A549 (cell line): ENCODE measurements at regions of chr2 and their contacts with region 1.

Region 1: DNA sequence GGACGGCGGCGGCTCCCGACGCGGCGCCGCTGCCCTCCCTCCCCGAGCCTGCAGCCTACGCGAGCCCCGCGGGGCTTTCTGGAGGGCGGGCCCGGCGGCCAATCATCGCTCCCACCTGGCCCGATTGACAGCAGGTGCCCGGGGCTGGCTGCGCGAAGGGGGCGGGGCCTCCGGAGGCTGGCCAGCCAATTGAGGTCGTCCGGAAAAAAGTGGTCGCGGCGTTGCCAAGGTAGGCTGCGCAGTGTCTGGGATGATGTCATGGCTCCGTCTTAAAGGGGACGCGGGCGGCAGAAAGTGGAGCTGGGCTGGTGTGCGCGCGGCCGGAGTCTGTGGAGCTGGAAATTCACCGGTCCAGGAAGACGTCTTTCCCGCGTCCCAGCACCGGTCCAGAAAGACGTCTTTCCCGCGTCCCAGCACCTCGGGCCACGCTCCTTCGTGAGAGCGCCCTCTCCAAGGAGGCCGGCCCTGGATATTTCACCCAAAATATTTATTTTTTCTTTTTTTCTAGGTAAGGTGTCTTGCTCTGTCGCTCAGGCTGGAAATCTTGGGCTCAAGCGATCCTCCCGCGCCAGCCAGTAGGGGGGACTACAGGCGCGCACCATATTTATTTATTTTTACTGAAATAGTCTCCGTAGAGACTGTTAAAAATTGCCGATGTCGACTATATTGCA is at the start of gene ACTR1B:
- DNase-seq: peak; percentile 85 to 98
- ATAC-seq: peak; percentile 90 to 95
- H3K4me3 ChIP-seq: peak within 1 kb of the TSS; percentile 95
- H3K27ac ChIP-seq: peak within 1 kb of the TSS; percentile 96 to 97
- H3K4me1 ChIP-seq: peaks cover 9% of the 10 kb centered on the region
- CTCF ChIP-seq: peak; percentile 61
- EP300 ChIP-seq: no peak
- POLR2A ChIP-seq: peak; percentile 65
- RAD21 ChIP-seq: peak; percentile 30 to 46; a peak in 3 of 5 replicates
- polyA plus RNA-seq, gene ACTR1B: 24.7 and 30.0 TPM in 2 replicates

Region 2: GRCh38 chr2:97645695-97646629 is 18.1 kb before region 1 on chr2 and contains the start of gene COX5B:
- CTCF ChIA-PET with region 1: interaction called, 19 read pairs
- POLR2A ChIA-PET with region 1: interaction called, 76 read pairs
- DNase-seq: peak; percentile 95
- ATAC-seq: peak; percentile 96 to 99
- H3K4me3 ChIP-seq: peak within 1 kb of the TSS; percentile 68
- H3K27ac ChIP-seq: peak within 1 kb of the TSS; percentile 82 to 98
- H3K4me1 ChIP-seq: peaks cover 10% of the 10 kb centered on the region; the same call in 2 of the 3 replicates
- CTCF ChIP-seq: no peak
- EP300 ChIP-seq: no peak
- POLR2A ChIP-seq: peak; percentile 64
- RAD21 ChIP-seq: no peak
- polyA plus RNA-seq, gene COX5B: 332 and 343 TPM in 2 replicates

Region 3: DNA sequence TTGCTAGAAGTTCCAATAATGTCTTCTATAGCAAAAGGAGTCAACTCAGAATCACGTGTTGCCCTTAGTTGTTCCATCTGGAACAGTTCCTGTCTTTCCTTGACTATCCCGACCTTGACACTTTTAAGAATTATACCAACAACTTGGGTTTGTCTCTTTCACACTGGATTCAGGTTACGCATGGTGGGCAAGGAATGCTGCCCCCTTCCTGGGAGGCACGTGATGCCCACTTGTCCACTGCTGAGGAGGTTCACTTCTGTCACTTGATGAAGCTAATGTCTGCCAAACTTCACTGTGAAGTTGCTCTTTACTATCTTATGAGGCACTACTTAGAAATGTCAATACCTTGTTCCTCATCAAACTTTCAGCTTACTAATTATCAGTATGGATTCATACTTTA is 13.0 kb before region 1 on chr2:
- CTCF ChIA-PET with region 1: interaction called, 19 read pairs
- POLR2A ChIA-PET with region 1: interaction called, 76 read pairs
- DNase-seq: no peak
- ATAC-seq: no peak
- H3K4me3 ChIP-seq: no peak overlapping the region
- H3K27ac ChIP-seq: no peak overlapping the region
- H3K4me1 ChIP-seq: peaks cover 7% of the 10 kb centered on the region; the same call in 2 of the 3 replicates
- CTCF ChIP-seq: no peak
- EP300 ChIP-seq: no peak
- POLR2A ChIP-seq: no peak
- RAD21 ChIP-seq: no peak